H1 (cell line): ENCODE measurements at regions of chr16 and their contacts with region 1.

Region 1: DNA sequence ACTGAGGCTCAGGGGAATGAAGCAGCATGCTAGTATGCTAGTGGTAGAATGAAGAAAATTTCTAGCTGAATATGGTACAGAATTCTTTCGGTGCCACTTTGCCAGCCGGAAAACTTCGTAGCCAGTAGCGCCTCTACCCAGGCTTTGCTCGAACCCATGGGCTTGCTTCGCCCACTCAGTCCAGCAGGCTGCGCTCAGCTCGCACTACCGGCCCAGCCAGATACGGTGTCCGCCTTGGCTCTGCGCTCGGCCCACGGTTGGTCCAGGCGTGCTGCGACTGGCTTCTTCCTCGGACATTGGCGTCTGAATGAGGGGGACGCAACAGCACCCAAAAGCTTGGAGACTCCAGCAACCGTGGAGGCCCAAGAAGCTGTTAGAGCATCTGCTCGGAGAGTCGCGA is 372.5 kb upstream of the CDH8 start:
- DNase-seq: peak; percentile 53 to 84
- H3K4me3 ChIP-seq: no peak overlapping the region
- H3K27ac ChIP-seq: no peak overlapping the region
- H3K4me1 ChIP-seq: peaks cover 0 to 9% (median 2%) of the 10 kb centered on the region in 4 experiments; a peak in 4 of 7 replicates
- H3K27me3 ChIP-seq: no peaks in the 10 kb centered on the region; a peak in 2 of 7 replicates
- CTCF ChIP-seq: peak; percentile 85 to 93 (median 91)
- EP300 ChIP-seq: no peak
- POLR2A ChIP-seq: no peak
- RAD21 ChIP-seq: peak; percentile 94 to 95

Region 2: GRCh38 chr16:62545039-62545438 is 136.3 kb after region 1 on chr16:
- CTCF ChIA-PET with region 1: interaction called, 36 read pairs
- POLR2A ChIA-PET with region 1: no interaction called
- DNase-seq: no peak
- H3K4me3 ChIP-seq: no peak overlapping the region
- H3K27ac ChIP-seq: no peak overlapping the region
- H3K4me1 ChIP-seq: peaks cover 0 to 5% (median 0%) of the 10 kb centered on the region in 4 experiments; a peak in 1 of 7 replicates
- H3K27me3 ChIP-seq: no peaks in the 10 kb centered on the region
- CTCF ChIP-seq: peak; percentile 11 to 49 (median 37)
- EP300 ChIP-seq: no peak
- POLR2A ChIP-seq: no peak
- RAD21 ChIP-seq: peak; percentile 61 to 70

Region 3: GRCh38 chr16:63289852-63290460 is 881.2 kb after region 1 on chr16:
- CTCF ChIA-PET with region 1: interaction called, 18 read pairs
- POLR2A ChIA-PET with region 1: no interaction called
- DNase-seq: peak; percentile 50 to 77
- H3K4me3 ChIP-seq: no peak overlapping the region
- H3K27ac ChIP-seq: no peak overlapping the region
- H3K4me1 ChIP-seq: no peaks in the 10 kb centered on the region
- H3K27me3 ChIP-seq: no peaks in the 10 kb centered on the region
- CTCF ChIP-seq: peak; percentile 52 to 90 (median 86)
- EP300 ChIP-seq: no peak
- POLR2A ChIP-seq: no peak
- RAD21 ChIP-seq: peak; percentile 97